Cardiac septum (tissue), 1 donor: ENCODE measurements at regions of chr3 and their contacts with region 1.

Region 1: GRCh38 chr3:52897130-52898122 is at the start of gene STIMATE:
- DNase-seq: peak; percentile 95
- total RNA-seq, gene STIMATE: 11.2 TPM

Region 2: DNA sequence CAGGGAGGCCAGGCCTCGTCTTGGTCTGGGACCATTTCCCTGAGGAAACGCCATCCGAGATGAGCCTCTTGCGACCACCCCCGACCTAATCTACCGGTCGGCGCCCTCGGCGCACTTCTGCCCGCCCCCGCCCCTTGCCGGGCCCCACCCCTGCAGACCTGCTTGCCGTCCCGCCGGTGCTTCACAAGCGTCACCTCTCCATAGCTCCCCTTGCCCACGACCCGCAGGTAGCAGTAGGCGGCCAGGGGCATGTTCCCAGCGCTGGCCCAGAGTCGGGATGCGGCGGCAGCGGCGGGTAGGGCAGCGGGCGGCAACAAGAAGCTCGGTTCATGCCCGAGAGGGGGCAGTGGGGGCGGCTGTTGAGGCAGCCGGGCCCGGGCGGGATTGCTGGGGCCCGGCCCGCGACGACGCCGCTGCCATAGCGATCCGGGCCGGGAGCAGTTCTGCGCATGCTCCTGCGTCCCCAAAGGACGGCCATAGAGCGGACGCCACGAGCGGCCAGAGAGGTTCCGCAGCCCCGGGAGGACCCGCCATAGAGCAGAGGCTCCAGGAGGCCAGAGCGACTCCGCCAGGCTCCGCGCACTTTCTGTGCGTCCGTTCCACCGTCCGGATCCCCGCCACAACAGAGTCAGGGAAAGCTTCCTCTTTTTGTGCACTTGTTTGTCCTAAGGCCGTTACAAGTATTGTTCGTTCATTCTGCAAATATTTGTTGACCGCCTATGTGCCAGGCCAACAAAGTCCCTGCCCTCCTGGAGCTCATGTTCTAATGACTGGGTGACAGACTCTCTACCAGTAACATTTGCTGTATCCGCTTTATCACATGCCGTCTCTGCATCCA is 126.7 kb before region 1 on chr3 and contains the start of gene NEK4:
- intact Hi-C with region 1: loop called (anchors 5 kb)
- DNase-seq: peak; percentile 96
- total RNA-seq, gene NEK4: 17.1 TPM

Region 3: DNA sequence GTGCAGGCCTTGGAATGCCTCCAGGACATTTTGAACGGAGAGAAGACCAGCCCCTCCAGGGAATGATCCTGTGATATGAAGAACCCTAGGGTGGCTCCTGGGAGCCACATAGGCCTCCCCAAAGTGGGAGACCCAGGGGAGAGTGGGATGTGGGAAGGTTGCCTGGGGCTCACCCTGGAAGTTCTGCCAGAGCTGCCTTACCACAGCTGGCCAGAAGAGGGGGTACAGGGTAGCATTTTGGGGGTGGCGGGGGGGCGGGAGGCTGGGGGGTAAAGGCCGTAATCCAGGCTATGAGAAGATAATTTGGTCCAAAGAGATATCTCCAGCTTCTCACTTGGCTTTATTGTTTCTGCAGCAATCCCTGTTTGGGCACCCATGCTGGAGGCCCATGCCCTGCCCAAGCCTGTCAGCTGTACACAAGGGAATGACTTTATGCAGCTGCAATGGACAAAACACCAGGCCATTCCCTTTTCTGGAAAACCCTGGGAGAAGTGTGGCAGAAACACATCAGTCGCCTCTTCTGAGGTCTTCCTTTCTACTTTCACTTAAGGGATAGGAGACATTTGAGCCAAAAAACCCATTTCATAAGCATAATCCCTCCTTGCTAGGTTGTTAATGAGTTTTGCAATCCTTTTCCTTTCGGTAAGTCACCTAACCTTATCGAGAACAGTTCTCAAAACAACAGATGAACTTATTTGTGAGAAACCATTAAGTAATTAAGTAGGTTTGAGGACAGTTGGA is 51.6 kb before region 1 on chr3:
- intact Hi-C with region 1: loop called (anchors 5 kb)
- DNase-seq: no peak

Region 4: DNA sequence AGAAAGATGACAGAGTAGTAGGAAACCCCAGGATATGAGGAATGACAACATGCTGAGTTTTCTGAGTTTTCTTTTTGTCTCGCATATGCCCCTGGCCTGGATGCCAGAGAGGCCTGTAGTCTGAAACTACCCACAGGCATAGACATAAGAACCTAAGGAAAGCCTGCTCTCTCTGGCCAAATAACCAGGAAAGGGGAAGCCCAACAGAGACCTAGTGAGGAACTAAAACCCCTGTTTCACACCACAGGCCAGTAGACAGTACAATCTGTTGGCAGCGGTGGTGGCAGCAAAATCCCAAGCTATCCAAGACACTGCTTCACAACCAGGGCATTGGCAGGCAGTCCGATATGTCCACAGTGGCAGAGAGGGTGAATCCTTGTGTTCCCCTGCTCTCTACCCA is 504.9 kb after region 1 on chr3:
- intact Hi-C with region 1: no loop called
- DNase-seq: no peak